Dorsolateral prefrontal cortex (tissue), 120 donors: ENCODE measurements at regions of chr17 and their contacts with region 1.

Region 1: GRCh38 chr17:43832976-43833829 is at the start of gene MPP3:
- DNase-seq: peak in 7 of 10 donors; percentile 32 to 80 (median 58)
- H3K4me3 ChIP-seq: peak within 1 kb of the TSS; percentile 48 to 93 (median 72)
- H3K27ac ChIP-seq: peak within 1 kb of the TSS in 30 of 59 donors; percentile 0 to 86 (median 44)
- H3K27me3 ChIP-seq: no peaks in the 10 kb centered on the region
- CTCF ChIP-seq: peak in 4 of 56 donors; percentile 8 to 20 (median 10)
- total RNA-seq, gene MPP3: 4.8 to 18.7 (median 9.5) TPM

Region 2: DNA sequence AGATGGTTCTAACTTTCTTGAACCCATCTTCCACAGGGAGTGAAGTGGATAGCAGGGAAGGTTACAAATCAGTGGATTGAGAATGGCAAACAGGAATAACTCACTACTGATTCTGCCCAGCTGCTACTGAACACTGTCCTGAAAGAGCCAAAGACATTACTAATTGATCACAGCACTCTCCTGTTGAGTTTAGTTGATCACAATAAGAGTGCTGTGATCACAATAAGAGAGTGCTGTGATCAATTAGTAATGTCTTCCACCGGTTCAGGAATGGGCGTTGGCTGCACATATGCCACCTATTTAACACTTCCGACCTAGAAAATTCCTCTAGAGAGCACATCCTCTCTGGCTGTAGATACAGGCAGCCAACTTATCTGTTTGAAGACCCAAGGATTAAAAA is 41.6 kb before region 1 on chr17:
- intact Hi-C with region 1: loop called in 1 of 2 experiments (anchors 5 kb)
- DNase-seq: no peak
- H3K4me3 ChIP-seq: peak overlapping the region in 2 of 59 donors; percentile 0 to 9
- H3K27ac ChIP-seq: no peak overlapping the region
- H3K27me3 ChIP-seq: no peaks in the 10 kb centered on the region
- CTCF ChIP-seq: no peak

Region 3: DNA sequence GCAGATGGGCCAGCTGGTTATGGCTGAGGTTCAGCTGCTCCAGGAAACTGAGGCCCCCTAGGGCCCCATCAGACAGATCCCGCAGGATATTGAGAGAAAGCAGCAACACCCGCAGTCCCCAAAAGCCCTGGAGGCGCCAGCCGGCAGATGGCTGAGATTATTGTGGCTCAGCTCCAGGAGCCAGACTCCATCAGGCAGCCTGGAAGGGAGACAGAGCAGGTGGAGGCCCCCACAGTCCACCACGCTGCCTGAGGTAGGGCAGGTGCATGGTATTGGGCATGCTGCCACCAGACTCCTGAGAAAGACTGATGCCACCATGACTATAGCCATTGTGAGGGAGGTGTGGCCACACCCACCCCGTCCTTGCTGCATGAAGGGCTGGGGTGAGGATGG is 191.1 kb after region 1 on chr17:
- intact Hi-C with region 1: no loop called
- DNase-seq: peak in 4 of 10 donors; percentile 50 to 92 (median 54)
- H3K4me3 ChIP-seq: no peak overlapping the region
- H3K27ac ChIP-seq: peak overlapping the region in 1 of 59 donors; percentile 18
- H3K27me3 ChIP-seq: no peaks in the 10 kb centered on the region
- CTCF ChIP-seq: no peak